GM23248 (cell line): ENCODE measurements at regions of chr17 and their contacts with region 1.

Region 1: GRCh38 chr17:27879987-27880608 is 13.1 kb downstream of the LYRM9 start:
- DNase-seq: peak; percentile 73
- H3K4me3 ChIP-seq: no peak overlapping the region
- H3K27ac ChIP-seq: no peak overlapping the region
- H3K4me1 ChIP-seq: no peaks in the 10 kb centered on the region
- H3K27me3 ChIP-seq: no peaks in the 10 kb centered on the region

Region 2: DNA sequence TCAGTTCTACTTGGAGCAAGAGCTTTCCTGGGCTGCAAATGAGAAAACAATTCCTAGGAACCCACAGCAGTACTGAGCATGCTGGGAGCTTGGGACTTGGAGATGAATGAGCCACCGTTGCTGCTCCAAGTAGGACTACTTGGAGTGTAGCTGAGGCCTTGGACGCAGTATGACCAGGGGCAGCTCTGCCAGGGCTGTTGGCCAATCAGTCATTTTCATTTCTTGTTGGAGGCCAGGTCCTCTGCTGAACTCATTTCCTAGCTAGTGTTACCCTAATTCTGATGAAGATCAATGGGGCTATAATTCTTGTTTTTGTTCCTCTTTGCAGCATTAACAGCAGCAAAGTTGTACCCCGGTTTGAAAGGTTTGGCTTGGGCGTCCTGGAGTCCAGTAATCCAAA is 257.1 kb before region 1 on chr17:
- in situ Hi-C with region 1: loop called (anchors 10 kb)
- DNase-seq: no peak
- H3K4me3 ChIP-seq: no peak overlapping the region
- H3K27ac ChIP-seq: no peak overlapping the region
- H3K4me1 ChIP-seq: no peaks in the 10 kb centered on the region
- H3K27me3 ChIP-seq: no peaks in the 10 kb centered on the region

Region 3: DNA sequence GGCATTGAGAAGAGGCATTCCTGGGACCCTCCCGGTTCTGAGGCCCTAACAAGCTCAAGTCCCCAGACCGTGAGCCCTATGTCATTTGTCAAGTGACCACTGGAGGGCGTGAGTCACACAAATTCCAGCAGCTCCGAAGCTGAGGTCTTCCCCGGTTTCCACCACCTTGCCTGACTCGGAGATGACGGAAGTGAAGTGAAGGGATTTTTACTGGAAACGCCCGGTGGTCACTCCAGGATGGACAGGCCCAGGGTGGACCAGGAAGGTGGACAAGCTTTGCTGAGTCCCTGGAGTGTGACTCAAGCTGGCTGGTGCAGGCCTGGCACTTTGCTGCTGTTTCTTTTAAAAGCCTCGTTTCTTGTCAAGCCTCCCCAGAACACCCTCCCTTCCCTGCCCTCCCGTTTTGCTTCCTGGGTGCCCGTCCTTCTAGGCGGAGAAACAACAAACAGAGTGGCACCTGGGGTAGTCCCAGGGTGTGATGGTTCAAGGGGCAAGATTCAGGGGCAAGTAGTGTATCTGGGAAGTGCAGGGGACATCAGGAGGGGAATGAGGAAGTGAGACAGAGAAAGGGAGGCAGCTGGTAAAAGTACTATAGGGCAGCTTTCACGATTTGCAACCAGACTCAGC is 74.5 kb before region 1 on chr17:
- in situ Hi-C with region 1: loop called (anchors 10 kb)
- DNase-seq: peak; percentile 83
- H3K4me3 ChIP-seq: peak overlapping the region; percentile 67
- H3K27ac ChIP-seq: no peak overlapping the region
- H3K4me1 ChIP-seq: no peaks in the 10 kb centered on the region
- H3K27me3 ChIP-seq: no peaks in the 10 kb centered on the region

Region 4: GRCh38 chr17:27939474-27940465 is 59.7 kb after region 1 on chr17:
- in situ Hi-C with region 1: loop called (anchors 10 kb)
- DNase-seq: no peak
- H3K4me3 ChIP-seq: no peak overlapping the region
- H3K27ac ChIP-seq: no peak overlapping the region
- H3K4me1 ChIP-seq: no peaks in the 10 kb centered on the region
- H3K27me3 ChIP-seq: peaks cover 6% of the 10 kb centered on the region; the same call in 1 of the 2 replicates